ENCODE measurements at regions of chr19 and their contacts with region 1.

Region 1: GRCh38 chr19:54159352-54160181 is at the start of gene LENG1:
- DNase-seq: peak; percentile 93 to 100
- H3K4me3 ChIP-seq: peak within 1 kb of the TSS; percentile 81 to 96 (median 88)
- H3K27ac ChIP-seq: peak within 1 kb of the TSS; percentile 84
- H3K4me1 ChIP-seq: peaks cover 0 to 24% (median 11%) of the 10 kb centered on the region in 4 experiments; a peak in 6 of 7 replicates
- H3K27me3 ChIP-seq: peaks cover 0 to 8% (median 4%) of the 10 kb centered on the region in 4 experiments; a peak in 4 of 7 replicates
- CTCF ChIP-seq: peak in 2 of 3 experiments; percentile 25 to 31; a peak in 3 of 4 replicates
- EP300 ChIP-seq: no peak; a peak in 1 of 3 replicates
- POLR2A ChIP-seq: peak; percentile 74 to 76; a peak in 2 of 3 replicates
- RAD21 ChIP-seq: no peak
- total RNA-seq, gene LENG1: 4.4 and 4.6 TPM in 2 replicates

Region 2: DNA sequence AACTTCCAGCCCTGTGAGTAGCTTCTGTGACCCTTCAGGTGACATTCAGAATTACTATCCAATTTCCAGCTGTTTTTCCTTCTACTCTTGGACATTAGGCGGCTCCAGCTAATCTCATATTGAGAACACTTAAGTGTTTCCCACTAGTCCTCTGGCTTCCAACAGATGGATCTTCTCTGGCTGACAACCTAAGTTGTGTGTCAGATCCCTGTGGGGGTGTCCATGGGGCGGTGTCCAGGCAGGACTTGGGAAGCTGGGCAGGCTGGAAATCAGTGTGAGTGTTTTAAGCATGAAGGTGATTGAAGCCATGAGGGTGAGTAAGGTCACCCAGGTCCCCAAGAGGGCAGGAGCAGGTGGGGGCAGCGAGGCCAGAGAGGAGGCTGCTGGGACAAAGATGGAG is 11.9 kb before region 1 on chr19:
- CTCF ChIA-PET with region 1: interaction called, 6 read pairs
- POLR2A ChIA-PET with region 1: interaction called, 348 read pairs
- DNase-seq: no peak
- H3K4me3 ChIP-seq: no peak overlapping the region
- H3K27ac ChIP-seq: no peak overlapping the region
- H3K4me1 ChIP-seq: no peaks in the 10 kb centered on the region
- H3K27me3 ChIP-seq: no peaks in the 10 kb centered on the region
- CTCF ChIP-seq: no peak
- EP300 ChIP-seq: no peak
- POLR2A ChIP-seq: no peak; a peak in 1 of 3 replicates
- RAD21 ChIP-seq: no peak

Region 3: DNA sequence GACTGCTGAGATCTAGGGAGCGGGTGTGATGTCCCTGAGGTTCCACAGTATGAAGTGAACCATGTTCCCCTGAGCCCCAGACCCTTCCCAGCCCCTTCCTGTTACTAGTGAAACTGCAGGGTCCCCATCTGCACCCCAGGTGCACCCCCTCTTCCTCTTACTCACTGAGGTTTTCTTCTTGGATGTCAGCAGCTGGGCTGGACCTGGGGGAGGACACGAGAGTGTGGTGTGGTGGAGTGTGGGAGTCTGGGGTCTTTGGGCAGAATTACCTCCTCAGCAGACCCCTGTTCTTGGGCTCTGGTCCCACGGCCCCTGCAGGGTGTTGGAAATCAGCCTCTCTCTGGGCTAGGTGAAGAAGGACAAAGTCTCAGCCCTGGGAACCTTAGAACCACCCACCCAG is 86.4 kb after region 1 on chr19:
- CTCF ChIA-PET with region 1: no interaction called
- POLR2A ChIA-PET with region 1: no interaction called
- DNase-seq: no peak
- H3K4me3 ChIP-seq: no peak overlapping the region
- H3K27ac ChIP-seq: no peak overlapping the region
- H3K4me1 ChIP-seq: no peaks in the 10 kb centered on the region
- H3K27me3 ChIP-seq: no peaks in the 10 kb centered on the region
- CTCF ChIP-seq: no peak
- EP300 ChIP-seq: no peak
- POLR2A ChIP-seq: no peak
- RAD21 ChIP-seq: no peak

Region 4: DNA sequence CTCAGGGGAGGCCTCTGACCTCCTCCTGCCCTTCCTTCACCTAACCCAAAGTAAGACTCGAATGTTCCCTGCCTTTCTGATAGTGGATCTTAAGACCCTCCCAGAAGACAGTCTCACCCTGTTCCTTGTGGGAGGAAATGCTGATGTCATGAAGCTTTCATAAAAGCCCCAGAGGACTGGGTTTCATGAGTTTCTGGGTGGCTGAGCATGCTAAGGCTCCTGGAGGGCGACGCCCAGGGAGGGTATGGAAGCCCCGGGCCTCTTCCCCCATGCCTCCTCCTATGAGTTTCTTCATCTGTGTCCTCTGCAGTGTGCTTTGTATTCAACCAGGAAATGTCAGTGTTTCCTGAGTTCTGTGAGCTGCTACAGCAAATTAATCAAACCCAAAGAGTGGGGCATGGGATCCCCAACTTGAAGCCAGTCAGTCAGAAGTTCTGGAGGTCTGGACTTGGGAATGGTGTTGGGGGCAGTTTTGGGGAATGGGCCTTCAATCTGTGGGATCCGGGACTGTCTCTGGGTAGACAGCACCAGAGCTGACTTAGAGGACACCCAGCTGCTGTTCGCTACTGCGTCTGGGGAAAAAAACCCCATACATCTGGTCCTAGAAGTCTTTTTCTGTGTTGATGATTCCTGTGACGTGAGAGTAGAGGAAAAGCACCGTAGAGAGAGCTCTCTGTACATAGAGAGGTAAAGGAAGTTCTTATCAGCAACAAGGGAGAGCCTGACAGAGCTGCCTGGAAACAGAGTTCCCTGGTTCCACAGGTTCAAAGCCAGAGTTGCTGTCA is 123.3 kb after region 1 on chr19:
- CTCF ChIA-PET with region 1: no interaction called
- POLR2A ChIA-PET with region 1: no interaction called
- DNase-seq: no peak
- H3K4me3 ChIP-seq: no peak overlapping the region
- H3K27ac ChIP-seq: no peak overlapping the region
- H3K4me1 ChIP-seq: no peaks in the 10 kb centered on the region
- H3K27me3 ChIP-seq: no peaks in the 10 kb centered on the region; a peak in 1 of 7 replicates
- CTCF ChIP-seq: no peak
- EP300 ChIP-seq: no peak
- POLR2A ChIP-seq: no peak
- RAD21 ChIP-seq: no peak

Measured in H1 (cell line).